Activated T-helper 1 cell treated with anti-CD3 and anti-CD28 coated beads, Interleukin-12 subunit alpha, Interleukin-12 subunit beta, Interleukin-2, Interleukin-4 antibody, amounts not matched to agents 30 ng/mL and 10 ng/mL and 1 ng/mL, durations not matched to agents 14 hours and 24 hours and 36 hours (primary cell): ENCODE measurements at regions of chr9 and their contacts with region 1.

Region 1: GRCh38 chr9:120792898-120793765 is at the start of gene FBXW2:
- DNase-seq: peak; percentile 90
- H3K4me3 Mint-ChIP-seq: peak within 1 kb of the TSS; percentile 98
- H3K27ac Mint-ChIP-seq: peak within 1 kb of the TSS; percentile 98
- H3K4me1 Mint-ChIP-seq: peaks cover 48% of the 10 kb centered on the region
- H3K27me3 Mint-ChIP-seq: no peaks in the 10 kb centered on the region
- total RNA-seq, gene FBXW2: 82.2 and 85.0 TPM in 2 replicates

Region 2: GRCh38 chr9:120579750-120580590 is 213.2 kb before region 1 on chr9 and contains the start of gene CDK5RAP2:
- intact Hi-C with region 1: loop called (anchors 1 kb)
- DNase-seq: peak; percentile 91
- H3K4me3 Mint-ChIP-seq: peak within 1 kb of the TSS; percentile 97
- H3K27ac Mint-ChIP-seq: peak within 1 kb of the TSS; percentile 95
- H3K4me1 Mint-ChIP-seq: peaks cover 54% of the 10 kb centered on the region
- H3K27me3 Mint-ChIP-seq: no peaks in the 10 kb centered on the region
- total RNA-seq, gene CDK5RAP2: 60.3 and 66.7 TPM in 2 replicates

Region 3: GRCh38 chr9:120755827-120756434 is 37.2 kb before region 1 on chr9:
- intact Hi-C with region 1: loop called (anchors 2 kb)
- DNase-seq: peak; percentile 53
- H3K4me3 Mint-ChIP-seq: no peak overlapping the region
- H3K27ac Mint-ChIP-seq: no peak overlapping the region
- H3K4me1 Mint-ChIP-seq: peaks cover 30% of the 10 kb centered on the region
- H3K27me3 Mint-ChIP-seq: no peaks in the 10 kb centered on the region

Region 4: GRCh38 chr9:120875954-120876841 is 83.1 kb after region 1 on chr9:
- intact Hi-C with region 1: loop called (anchors 2 kb)
- DNase-seq: peak; percentile 86
- H3K4me3 Mint-ChIP-seq: peak overlapping the region; percentile 89
- H3K27ac Mint-ChIP-seq: peak overlapping the region; percentile 97
- H3K4me1 Mint-ChIP-seq: peaks cover 75% of the 10 kb centered on the region
- H3K27me3 Mint-ChIP-seq: no peaks in the 10 kb centered on the region

Region 5: GRCh38 chr9:121074635-121075385 is 281.7 kb after region 1 on chr9 and contains the start of gene CNTRL:
- intact Hi-C with region 1: loop called (anchors 1 kb)
- DNase-seq: peak; percentile 90
- H3K4me3 Mint-ChIP-seq: peak within 1 kb of the TSS; percentile 100
- H3K27ac Mint-ChIP-seq: peak within 1 kb of the TSS; percentile 91
- H3K4me1 Mint-ChIP-seq: peaks cover 57% of the 10 kb centered on the region
- H3K27me3 Mint-ChIP-seq: no peaks in the 10 kb centered on the region
- total RNA-seq, gene CNTRL: 69.9 and 74.2 TPM in 2 replicates

Region 6: GRCh38 chr9:121201738-121202533 is 408.8 kb after region 1 on chr9 and contains the start of gene RAB14:
- intact Hi-C with region 1: loop called (anchors 5 kb)
- DNase-seq: peak; percentile 100
- H3K4me3 Mint-ChIP-seq: peak within 1 kb of the TSS; percentile 96
- H3K27ac Mint-ChIP-seq: peak within 1 kb of the TSS; percentile 92
- H3K4me1 Mint-ChIP-seq: peaks cover 61% of the 10 kb centered on the region
- H3K27me3 Mint-ChIP-seq: no peaks in the 10 kb centered on the region
- total RNA-seq, gene RAB14: 64.8 and 69.3 TPM in 2 replicates